A673 (cell line): ENCODE measurements at regions of chr10 and their contacts with region 1.

Region 1: GRCh38 chr10:70540089-70540788 is 61.7 kb downstream of the PALD1 start:
- DNase-seq: no peak
- H3K4me3 ChIP-seq: no peak overlapping the region
- H3K27ac ChIP-seq: no peak overlapping the region
- H3K4me1 ChIP-seq: no peaks in the 10 kb centered on the region
- H3K27me3 ChIP-seq: no peaks in the 10 kb centered on the region
- CTCF ChIP-seq: peak; percentile 60

Region 2: GRCh38 chr10:70461215-70461986 is 78.8 kb before region 1 on chr10:
- CTCF ChIA-PET with region 1: no interaction called
- POLR2A ChIA-PET with region 1: no interaction called
- intact Hi-C with region 1: loop called (anchors 5 kb)
- DNase-seq: peak; percentile 59
- H3K4me3 ChIP-seq: no peak overlapping the region
- H3K27ac ChIP-seq: no peak overlapping the region
- H3K4me1 ChIP-seq: peaks cover 20% of the 10 kb centered on the region
- H3K27me3 ChIP-seq: no peaks in the 10 kb centered on the region
- CTCF ChIP-seq: peak; percentile 71